Activated T-helper 1 cell treated with anti-CD3 and anti-CD28 coated beads, Interleukin-12 subunit alpha, Interleukin-12 subunit beta, Interleukin-2, Interleukin-4 antibody, amounts not matched to agents 30 ng/mL and 10 ng/mL and 1 ng/mL, durations not matched to agents 14 hours and 24 hours and 36 hours (primary cell): ENCODE measurements at regions of chr15 and their contacts with region 1.

Region 1: GRCh38 chr15:90086868-90087268 is 15.4 kb downstream of the IDH2 start:
- DNase-seq: no peak
- H3K4me3 Mint-ChIP-seq: no peak overlapping the region
- H3K27ac Mint-ChIP-seq: no peak overlapping the region
- H3K4me1 Mint-ChIP-seq: peaks cover 4% of the 10 kb centered on the region
- H3K27me3 Mint-ChIP-seq: no peaks in the 10 kb centered on the region

Region 2: DNA sequence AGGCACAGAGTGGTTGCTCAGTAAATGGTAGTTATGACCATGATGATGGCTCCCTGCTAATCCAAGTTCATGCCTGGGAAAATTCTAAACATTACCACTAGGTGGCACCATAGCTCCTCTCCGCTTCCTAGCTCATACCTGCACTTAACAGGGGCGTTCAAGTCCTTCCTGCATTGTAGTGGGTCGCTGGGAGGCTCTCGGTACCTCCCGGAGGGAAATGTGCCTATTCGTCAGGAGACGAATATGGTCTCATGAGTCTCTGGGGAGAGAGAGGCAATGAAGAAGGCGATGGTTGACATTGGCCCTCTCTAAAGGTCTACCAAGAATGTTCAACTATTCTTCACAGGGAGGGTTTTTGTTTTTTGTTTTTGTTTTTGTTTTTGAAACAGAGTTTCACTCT is 346.7 kb before region 1 on chr15:
- intact Hi-C with region 1: loop called (anchors 1 kb)
- DNase-seq: peak; percentile 53
- H3K4me3 Mint-ChIP-seq: no peak overlapping the region
- H3K27ac Mint-ChIP-seq: no peak overlapping the region
- H3K4me1 Mint-ChIP-seq: no peaks in the 10 kb centered on the region
- H3K27me3 Mint-ChIP-seq: peaks cover 14% of the 10 kb centered on the region

Region 3: GRCh38 chr15:89760303-89761008 is 326.4 kb before region 1 on chr15:
- intact Hi-C with region 1: loop called (anchors 1 kb)
- DNase-seq: peak; percentile 53
- H3K4me3 Mint-ChIP-seq: no peak overlapping the region
- H3K27ac Mint-ChIP-seq: no peak overlapping the region
- H3K4me1 Mint-ChIP-seq: no peaks in the 10 kb centered on the region
- H3K27me3 Mint-ChIP-seq: peaks cover 13% of the 10 kb centered on the region

Region 4: DNA sequence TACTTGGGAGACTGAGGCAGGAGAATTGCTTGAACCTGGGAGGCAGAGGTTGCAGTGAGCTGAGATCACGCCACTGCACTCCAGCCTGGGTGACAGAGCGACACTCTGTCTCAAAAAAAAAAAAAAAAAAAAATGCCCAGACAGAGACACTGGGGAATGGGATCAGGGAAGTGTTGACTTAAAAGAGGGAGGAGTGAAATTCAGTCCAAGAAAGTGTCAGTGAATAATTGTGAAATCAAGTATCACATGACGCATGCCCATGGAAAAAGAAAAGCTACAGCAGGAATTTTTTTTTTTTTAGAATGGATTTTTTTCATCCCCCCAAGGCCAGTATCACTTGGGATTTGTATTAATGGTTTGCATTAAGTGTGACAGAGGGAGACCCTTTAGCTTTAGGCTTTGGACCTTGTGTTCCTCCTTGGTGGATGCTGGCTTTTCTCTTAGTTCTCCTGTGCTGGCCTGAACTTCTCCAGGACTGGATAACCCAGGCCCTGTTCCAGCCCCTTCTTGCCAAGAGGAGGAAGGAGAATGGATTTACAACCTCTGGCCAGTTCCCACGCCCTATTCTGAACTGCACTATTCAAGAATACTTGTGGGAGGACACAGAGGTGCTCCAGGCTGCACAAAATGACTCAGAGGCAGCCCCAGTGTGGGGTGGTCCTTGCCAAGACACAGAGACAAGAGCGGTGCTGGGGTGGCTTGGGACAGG is 228.6 kb after region 1 on chr15:
- intact Hi-C with region 1: no loop called
- DNase-seq: no peak
- H3K4me3 Mint-ChIP-seq: no peak overlapping the region
- H3K27ac Mint-ChIP-seq: no peak overlapping the region
- H3K4me1 Mint-ChIP-seq: peaks cover 18% of the 10 kb centered on the region
- H3K27me3 Mint-ChIP-seq: peaks cover 22% of the 10 kb centered on the region